ENCODE measurements at regions of chr17 and their contacts with region 1.

Region 1: GRCh38 chr17:48047741-48048383 is at the start of gene NFE2L1:
- DNase-seq: peak; percentile 86 to 99 (median 98)
- ATAC-seq: peak; percentile 98
- H3K4me3 ChIP-seq: peak within 1 kb of the TSS; percentile 78
- H3K4me3 Mint-ChIP-seq: peak within 1 kb of the TSS; percentile 79 to 100 (median 94)
- H3K27ac ChIP-seq: peak within 1 kb of the TSS; percentile 87
- H3K27ac Mint-ChIP-seq: peak within 1 kb of the TSS; percentile 92 to 99 (median 98)
- H3K4me1 ChIP-seq: peaks cover 18 to 19% of the 10 kb centered on the region in 2 donors
- H3K4me1 Mint-ChIP-seq: peaks cover 37 to 68% (median 61%) of the 10 kb centered on the region in 7 donors
- H3K27me3 ChIP-seq: no peaks in the 10 kb centered on the region
- H3K27me3 Mint-ChIP-seq: no peaks in the 10 kb centered on the region
- total RNA-seq, gene NFE2L1: 34.7 to 65.2 (median 49.2) TPM

Region 2: DNA sequence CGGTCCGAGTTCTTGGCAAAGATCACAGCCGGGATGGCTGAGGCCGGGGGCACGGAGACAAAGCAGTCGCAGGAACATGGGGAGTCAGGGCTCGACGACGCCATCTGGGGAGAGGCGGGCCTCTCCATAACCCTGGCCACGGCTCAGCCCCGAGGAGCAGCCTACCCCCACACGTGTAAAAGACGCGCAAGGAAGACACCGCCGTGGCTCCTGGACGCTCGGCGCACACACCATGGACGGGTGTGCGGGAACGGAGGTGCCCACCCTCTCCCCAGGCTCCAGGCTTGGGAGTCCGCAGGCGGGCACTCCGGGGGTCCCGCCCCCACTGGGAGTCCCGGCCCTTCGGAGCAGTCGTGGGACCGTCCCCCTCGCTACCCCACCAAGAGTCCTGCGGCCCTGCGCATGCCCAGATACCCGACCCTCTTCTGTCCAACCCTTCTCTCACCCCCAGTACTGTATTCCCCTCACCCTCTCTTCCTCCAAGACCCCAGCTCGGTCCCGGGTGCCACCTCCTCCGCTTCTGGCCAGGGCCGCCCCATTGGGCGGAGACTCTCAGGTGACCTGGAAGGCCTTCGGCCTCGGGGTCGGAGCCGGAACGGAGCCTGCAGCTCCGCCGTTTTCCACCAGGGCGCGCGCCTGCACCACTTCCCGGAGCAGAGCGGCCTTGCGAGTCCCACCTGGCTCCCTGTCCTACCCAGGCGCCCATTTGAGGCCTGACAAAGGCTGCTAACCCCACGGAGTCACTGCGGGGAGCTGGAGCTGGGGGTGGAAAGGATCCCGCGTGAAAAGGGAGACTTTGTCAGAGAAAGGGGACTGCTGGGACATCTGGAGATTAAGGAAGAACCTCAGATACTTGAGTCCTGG is 206.9 kb before region 1 on chr17 and contains the start of gene SCRN2:
- CTCF ChIA-PET with region 1: no interaction called
- POLR2A ChIA-PET with region 1: no interaction called
- intact Hi-C with region 1: loop called in 1 of 2 experiments (anchors 10 kb)
- DNase-seq: peak; percentile 71 to 94 (median 81)
- ATAC-seq: peak; percentile 94
- H3K4me3 ChIP-seq: peak within 1 kb of the TSS; percentile 95
- H3K4me3 Mint-ChIP-seq: peak within 1 kb of the TSS; percentile 84 to 99 (median 94)
- H3K27ac ChIP-seq: peak within 1 kb of the TSS; percentile 75
- H3K27ac Mint-ChIP-seq: peak within 1 kb of the TSS; percentile 55 to 93 (median 86)
- H3K4me1 ChIP-seq: peaks cover 19 to 21% of the 10 kb centered on the region in 2 donors
- H3K4me1 Mint-ChIP-seq: peaks cover 9 to 49% (median 38%) of the 10 kb centered on the region in 7 donors
- H3K27me3 ChIP-seq: peaks cover 0 to 7% of the 10 kb centered on the region in 2 donors
- H3K27me3 Mint-ChIP-seq: peaks cover 6 to 23% (median 18%) of the 10 kb centered on the region in 5 donors
- total RNA-seq, gene SCRN2: 33.4 to 55.9 (median 41.4) TPM

Region 3: GRCh38 chr17:47970704-47971463 is 77.0 kb before region 1 on chr17 and contains the start of gene CDK5RAP3:
- CTCF ChIA-PET with region 1: no interaction called
- POLR2A ChIA-PET with region 1: interaction called, 6 read pairs
- intact Hi-C with region 1: loop called (anchors 1 to 2 kb)
- DNase-seq: peak; percentile 93 to 99 (median 97)
- ATAC-seq: peak; percentile 100
- H3K4me3 ChIP-seq: peak within 1 kb of the TSS; percentile 96
- H3K4me3 Mint-ChIP-seq: peak within 1 kb of the TSS; percentile 95 to 100 (median 99)
- H3K27ac ChIP-seq: peak within 1 kb of the TSS; percentile 71
- H3K27ac Mint-ChIP-seq: peak within 1 kb of the TSS; percentile 83 to 96 (median 93)
- H3K4me1 ChIP-seq: peaks cover 6 to 12% of the 10 kb centered on the region in 2 donors
- H3K4me1 Mint-ChIP-seq: peaks cover 14 to 41% (median 26%) of the 10 kb centered on the region in 7 donors
- H3K27me3 ChIP-seq: no peaks in the 10 kb centered on the region
- H3K27me3 Mint-ChIP-seq: no peaks in the 10 kb centered on the region
- total RNA-seq, gene CDK5RAP3: 238 to 349 (median 276) TPM

Region 4: DNA sequence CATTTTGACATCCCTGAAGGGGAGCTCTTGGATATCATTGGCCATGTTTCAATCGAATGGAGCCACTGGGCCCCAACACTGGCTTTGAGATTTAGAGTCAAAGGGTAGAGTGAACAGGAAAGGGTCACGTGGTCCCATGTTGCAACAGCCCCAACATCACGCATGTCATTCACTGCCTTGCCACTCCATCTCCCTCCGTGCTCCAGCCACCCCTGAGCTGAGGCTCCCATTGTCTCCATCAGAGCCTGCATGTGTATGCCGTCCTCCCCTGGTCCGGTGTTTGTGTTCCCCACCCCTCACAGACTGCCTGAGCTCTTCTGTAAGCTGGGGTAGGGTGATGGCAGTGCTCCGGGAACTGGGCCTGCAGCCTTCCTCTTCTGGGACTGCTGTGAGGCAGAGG is 12.4 kb after region 1 on chr17:
- CTCF ChIA-PET with region 1: interaction called, 3 read pairs
- POLR2A ChIA-PET with region 1: interaction called, 13 read pairs
- intact Hi-C with region 1: no loop called
- DNase-seq: no peak
- ATAC-seq: no peak
- H3K4me3 ChIP-seq: no peak overlapping the region
- H3K4me3 Mint-ChIP-seq: no peak overlapping the region
- H3K27ac ChIP-seq: no peak overlapping the region
- H3K27ac Mint-ChIP-seq: peak overlapping the region in 1 of 9 donors; percentile 12
- H3K4me1 ChIP-seq: no peaks in the 10 kb centered on the region
- H3K4me1 Mint-ChIP-seq: peaks cover 5 to 19% (median 14%) of the 10 kb centered on the region in 7 donors
- H3K27me3 ChIP-seq: no peaks in the 10 kb centered on the region
- H3K27me3 Mint-ChIP-seq: no peaks in the 10 kb centered on the region

Region 5: GRCh38 chr17:48107168-48108132 is 59.6 kb after region 1 on chr17 and contains the start of gene SNX11:
- CTCF ChIA-PET with region 1: interaction called, 4 read pairs
- POLR2A ChIA-PET with region 1: interaction called, 11 read pairs
- intact Hi-C with region 1: loop called (anchors 1 kb)
- DNase-seq: peak; percentile 85 to 97 (median 94)
- ATAC-seq: peak; percentile 96
- H3K4me3 ChIP-seq: peak within 1 kb of the TSS; percentile 97
- H3K4me3 Mint-ChIP-seq: peak within 1 kb of the TSS; percentile 92 to 99 (median 96)
- H3K27ac ChIP-seq: peak within 1 kb of the TSS; percentile 89
- H3K27ac Mint-ChIP-seq: peak within 1 kb of the TSS; percentile 89 to 96 (median 93)
- H3K4me1 ChIP-seq: peaks cover 19 to 20% of the 10 kb centered on the region in 2 donors
- H3K4me1 Mint-ChIP-seq: peaks cover 45 to 68% (median 62%) of the 10 kb centered on the region in 7 donors
- H3K27me3 ChIP-seq: no peaks in the 10 kb centered on the region
- H3K27me3 Mint-ChIP-seq: no peaks in the 10 kb centered on the region
- total RNA-seq, gene SNX11: 12.3 to 35.1 (median 16.7) TPM

Region 6: GRCh38 chr17:48162946-48163506 is 115.2 kb after region 1 on chr17:
- CTCF ChIA-PET with region 1: no interaction called
- POLR2A ChIA-PET with region 1: no interaction called
- intact Hi-C with region 1: no loop called
- DNase-seq: no peak
- ATAC-seq: no peak
- H3K4me3 ChIP-seq: no peak overlapping the region
- H3K4me3 Mint-ChIP-seq: no peak overlapping the region
- H3K27ac ChIP-seq: no peak overlapping the region
- H3K27ac Mint-ChIP-seq: peak overlapping the region in 8 of 9 donors; percentile 9 to 63 (median 32)
- H3K4me1 ChIP-seq: no peaks in the 10 kb centered on the region
- H3K4me1 Mint-ChIP-seq: peaks cover 0 to 29% (median 5%) of the 10 kb centered on the region in 7 donors
- H3K27me3 ChIP-seq: no peaks in the 10 kb centered on the region
- H3K27me3 Mint-ChIP-seq: no peaks in the 10 kb centered on the region

Region 7: GRCh38 chr17:48908047-48908843 is 860.4 kb after region 1 on chr17 and contains the start of gene UBE2Z:
- CTCF ChIA-PET with region 1: no interaction called
- POLR2A ChIA-PET with region 1: no interaction called
- intact Hi-C with region 1: loop called in 1 of 2 experiments (anchors 5 kb)
- DNase-seq: peak; percentile 71 to 86 (median 84)
- ATAC-seq: peak; percentile 96
- H3K4me3 ChIP-seq: peak within 1 kb of the TSS; percentile 62
- H3K4me3 Mint-ChIP-seq: peak within 1 kb of the TSS; percentile 90 to 100 (median 96)
- H3K27ac ChIP-seq: peak within 1 kb of the TSS; percentile 93
- H3K27ac Mint-ChIP-seq: peak within 1 kb of the TSS; percentile 95 to 99 (median 98)
- H3K4me1 ChIP-seq: peaks cover 22 to 33% of the 10 kb centered on the region in 2 donors
- H3K4me1 Mint-ChIP-seq: peaks cover 32 to 52% (median 50%) of the 10 kb centered on the region in 7 donors
- H3K27me3 ChIP-seq: no peaks in the 10 kb centered on the region
- H3K27me3 Mint-ChIP-seq: no peaks in the 10 kb centered on the region
- total RNA-seq, gene UBE2Z: 71.6 to 96.6 (median 91.8) TPM